ENCODE measurements at regions of chr12 and their contacts with region 1.

Region 1: DNA sequence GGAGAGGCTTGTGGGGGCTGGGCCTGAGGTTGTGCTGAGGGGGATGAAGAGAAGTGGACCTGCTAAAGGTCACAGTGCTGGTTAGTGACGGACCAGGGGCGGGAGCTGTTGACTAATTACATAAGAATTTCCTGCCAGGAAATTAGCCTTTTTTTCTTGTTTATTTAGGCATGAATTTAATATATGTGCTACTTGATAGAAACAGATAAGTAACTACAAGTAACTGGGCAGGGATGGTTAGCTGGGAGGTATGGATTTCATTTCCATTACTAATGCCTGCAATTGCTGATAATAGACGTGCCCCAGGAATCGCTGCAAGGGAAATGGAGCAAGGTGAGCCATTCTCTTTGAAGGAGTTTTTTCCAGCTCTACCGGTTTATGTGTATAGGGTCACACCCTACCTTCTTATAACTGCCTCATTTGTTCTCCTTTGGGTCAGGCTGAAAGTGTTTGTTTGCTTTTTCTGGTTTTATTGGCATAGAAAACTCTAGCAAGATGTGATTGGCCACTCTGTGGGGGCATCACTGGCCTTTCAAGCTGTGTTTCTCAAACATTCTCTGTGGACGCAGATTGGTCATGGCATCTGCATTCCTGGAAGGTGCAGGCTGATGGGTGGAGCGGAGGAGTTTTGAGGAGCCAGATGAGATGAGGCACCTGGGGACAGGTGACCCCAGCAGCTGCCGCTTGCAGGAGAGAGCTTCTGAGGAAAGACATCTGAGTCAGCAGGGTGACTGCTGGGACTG is 19.1 kb upstream of the GPRC5A start:
- DNase-seq: peak; percentile 98
- H3K4me3 ChIP-seq: peak overlapping the region in 1 of 3 experiments; percentile 3
- H3K27ac ChIP-seq: peak overlapping the region; percentile 89
- H3K4me1 ChIP-seq: peaks cover 39% of the 10 kb centered on the region
- H3K27me3 ChIP-seq: no peaks in the 10 kb centered on the region
- CTCF ChIP-seq: no peak

Region 2: DNA sequence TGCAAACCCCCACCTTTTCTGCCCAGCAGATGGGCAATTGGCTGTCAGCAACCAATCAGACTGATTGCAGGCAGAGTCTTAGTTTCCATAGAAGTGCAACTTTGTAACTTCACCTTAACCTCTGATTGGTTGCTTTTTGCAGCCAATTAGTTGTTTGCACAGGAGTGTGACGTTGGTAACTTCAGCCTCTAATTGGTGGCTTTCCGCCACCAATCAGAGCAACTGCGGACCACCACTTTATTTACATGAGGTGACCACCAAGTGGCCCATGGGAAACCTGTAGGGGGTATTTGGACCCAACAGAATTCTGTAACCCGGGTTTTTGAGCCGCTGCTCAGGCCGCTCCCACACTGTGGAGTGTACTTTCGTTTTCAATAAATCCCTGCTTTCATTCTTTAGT is 122.9 kb before region 1 on chr12:
- CTCF ChIA-PET with region 1: no interaction called
- dilution Hi-C with region 1: no loop called
- in situ Hi-C with region 1: no loop called
- intact Hi-C with region 1: no loop called
- DNase-seq: no peak
- H3K4me3 ChIP-seq: no peak overlapping the region
- H3K27ac ChIP-seq: no peak overlapping the region
- H3K4me1 ChIP-seq: peaks cover 12% of the 10 kb centered on the region
- H3K27me3 ChIP-seq: no peaks in the 10 kb centered on the region
- CTCF ChIP-seq: no peak

Region 3: GRCh38 chr12:12883369-12884001 is 11.2 kb after region 1 on chr12:
- CTCF ChIA-PET with region 1: no interaction called
- dilution Hi-C with region 1: no loop called
- in situ Hi-C with region 1: no loop called
- intact Hi-C with region 1: loop called (anchors 1 kb)
- DNase-seq: peak; percentile 90
- H3K4me3 ChIP-seq: no peak overlapping the region
- H3K27ac ChIP-seq: peak overlapping the region; percentile 90
- H3K4me1 ChIP-seq: peaks cover 26% of the 10 kb centered on the region
- H3K27me3 ChIP-seq: no peaks in the 10 kb centered on the region
- CTCF ChIP-seq: no peak

Measured in mammary epithelial cell (primary cell).